Endothelial cell of umbilical vein (primary cell): ENCODE measurements at regions of chr20 and their contacts with region 1.

Region 1: DNA sequence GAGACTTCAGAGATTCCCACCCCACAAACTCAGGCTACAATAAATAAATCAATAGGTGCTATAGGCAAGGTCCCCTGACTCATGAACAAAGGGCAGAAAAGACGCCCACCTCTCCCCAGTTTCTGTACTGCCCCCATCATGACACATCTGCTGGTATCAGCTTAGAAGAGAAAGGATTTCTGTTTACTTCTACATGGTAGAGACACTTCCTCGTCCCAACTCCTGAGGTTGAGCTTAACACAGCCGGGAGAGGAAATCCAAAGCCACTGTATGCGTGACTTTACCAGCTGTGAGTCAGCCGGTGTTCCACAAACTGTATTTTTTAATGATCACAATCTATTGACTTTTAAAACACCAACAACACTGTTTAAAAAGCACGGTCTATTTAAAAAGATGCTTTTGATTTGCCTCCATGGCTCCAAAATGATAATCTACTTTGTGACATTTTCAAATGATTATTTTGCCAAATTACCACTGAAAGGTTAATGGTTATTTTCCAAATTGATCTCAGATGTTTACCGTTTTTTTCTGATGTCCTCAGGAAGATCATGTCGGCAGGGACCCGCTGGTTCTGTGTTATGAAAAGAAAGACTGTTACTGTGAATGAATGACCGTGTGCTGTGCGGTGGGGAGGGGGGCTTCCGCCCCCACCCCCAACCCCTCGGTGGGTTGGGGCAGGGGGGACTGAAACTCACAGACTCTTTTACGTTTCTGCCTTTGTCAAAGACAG is 72.5 kb downstream of the ATP9A start:
- DNase-seq: peak; percentile 96
- H3K4me3 ChIP-seq: peak overlapping the region in 1 of 3 experiments; percentile 8
- H3K27ac ChIP-seq: peak overlapping the region; percentile 98
- H3K4me1 ChIP-seq: peaks cover 31% of the 10 kb centered on the region
- H3K27me3 ChIP-seq: no peaks in the 10 kb centered on the region
- CTCF ChIP-seq: no peak
- POLR2A ChIP-seq: no peak

Region 2: DNA sequence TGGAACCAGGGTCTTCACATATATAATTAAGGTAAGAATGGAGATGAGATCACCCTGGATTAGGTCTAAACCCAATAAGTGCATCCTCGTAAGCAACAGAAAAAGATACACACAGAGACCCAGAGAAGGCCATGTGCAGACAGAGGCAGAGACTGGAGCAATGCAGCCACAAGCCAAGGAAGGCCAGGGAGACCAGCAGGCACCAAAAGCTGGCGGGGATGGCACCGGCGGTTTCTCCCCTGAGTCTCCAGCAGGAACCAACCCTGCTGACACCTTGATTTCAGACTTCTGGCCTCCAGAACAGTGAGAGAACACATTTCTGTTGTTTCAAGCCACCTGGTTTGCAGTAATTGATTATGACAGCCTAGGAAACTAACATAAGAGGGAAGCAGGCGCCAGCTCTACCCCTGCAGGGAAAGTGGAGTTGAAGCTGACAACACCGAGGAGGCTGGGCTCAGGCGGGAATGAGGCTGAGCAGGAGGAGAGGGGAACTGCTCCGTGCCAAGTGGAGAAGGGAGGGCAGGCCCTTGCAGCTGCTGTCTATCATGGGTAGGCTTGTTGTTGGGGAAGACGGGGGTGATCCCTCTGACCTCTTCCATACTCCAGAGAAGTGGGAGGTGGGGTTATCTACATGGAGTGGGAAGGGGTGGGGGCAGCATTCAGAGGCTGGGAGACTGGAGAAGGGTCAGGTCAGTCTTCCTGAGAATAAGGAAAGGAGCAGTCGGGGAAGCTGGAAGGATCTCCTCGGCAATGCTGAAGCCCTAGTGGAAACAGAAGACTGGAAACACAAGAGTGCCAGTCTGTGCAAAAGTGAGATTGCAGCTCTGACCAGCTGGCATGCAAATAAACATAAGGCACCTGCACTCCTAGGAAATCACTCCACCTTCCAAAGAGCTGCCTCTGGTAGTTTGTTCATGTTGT is 225.9 kb before region 1 on chr20:
- CTCF ChIA-PET with region 1: no interaction called
- POLR2A ChIA-PET with region 1: no interaction called
- dilution Hi-C with region 1: no loop called
- intact Hi-C with region 1: no loop called
- DNase-seq: peak; percentile 80
- H3K4me3 ChIP-seq: no peak overlapping the region
- H3K27ac ChIP-seq: no peak overlapping the region
- H3K4me1 ChIP-seq: peaks cover 2% of the 10 kb centered on the region
- H3K27me3 ChIP-seq: no peaks in the 10 kb centered on the region
- CTCF ChIP-seq: no peak
- POLR2A ChIP-seq: no peak

Region 3: GRCh38 chr20:51480507-51481270 is 215.1 kb before region 1 on chr20:
- CTCF ChIA-PET with region 1: no interaction called
- POLR2A ChIA-PET with region 1: no interaction called
- dilution Hi-C with region 1: no loop called
- intact Hi-C with region 1: no loop called
- DNase-seq: no peak
- H3K4me3 ChIP-seq: no peak overlapping the region
- H3K27ac ChIP-seq: no peak overlapping the region
- H3K4me1 ChIP-seq: no peaks in the 10 kb centered on the region
- H3K27me3 ChIP-seq: no peaks in the 10 kb centered on the region
- CTCF ChIP-seq: no peak
- POLR2A ChIP-seq: no peak

Region 4: GRCh38 chr20:51639206-51639832 is 56.4 kb before region 1 on chr20:
- CTCF ChIA-PET with region 1: interaction called, 49 read pairs
- POLR2A ChIA-PET with region 1: no interaction called
- dilution Hi-C with region 1: no loop called
- intact Hi-C with region 1: loop called (anchors 1 kb)
- DNase-seq: peak; percentile 84
- H3K4me3 ChIP-seq: no peak overlapping the region
- H3K27ac ChIP-seq: no peak overlapping the region
- H3K4me1 ChIP-seq: peaks cover 3% of the 10 kb centered on the region
- H3K27me3 ChIP-seq: no peaks in the 10 kb centered on the region
- CTCF ChIP-seq: peak; percentile 83 to 88
- POLR2A ChIP-seq: no peak

Region 5: GRCh38 chr20:51712501-51713197 is 16.9 kb after region 1 on chr20:
- CTCF ChIA-PET with region 1: interaction called, 11 read pairs
- POLR2A ChIA-PET with region 1: no interaction called
- dilution Hi-C with region 1: no loop called
- intact Hi-C with region 1: no loop called
- DNase-seq: peak; percentile 23
- H3K4me3 ChIP-seq: no peak overlapping the region
- H3K27ac ChIP-seq: no peak overlapping the region
- H3K4me1 ChIP-seq: no peaks in the 10 kb centered on the region
- H3K27me3 ChIP-seq: no peaks in the 10 kb centered on the region
- CTCF ChIP-seq: peak; percentile 37 to 43
- POLR2A ChIP-seq: no peak

Region 6: GRCh38 chr20:51767010-51767558 is 71.3 kb after region 1 on chr20:
- CTCF ChIA-PET with region 1: interaction called, 4 read pairs
- POLR2A ChIA-PET with region 1: no interaction called
- dilution Hi-C with region 1: no loop called
- intact Hi-C with region 1: loop called (anchors 5 kb)
- DNase-seq: peak; percentile 40
- H3K4me3 ChIP-seq: peak overlapping the region; percentile 51 to 88 (median 86)
- H3K27ac ChIP-seq: no peak overlapping the region
- H3K4me1 ChIP-seq: no peaks in the 10 kb centered on the region
- H3K27me3 ChIP-seq: no peaks in the 10 kb centered on the region
- CTCF ChIP-seq: no peak
- POLR2A ChIP-seq: no peak

Region 7: DNA sequence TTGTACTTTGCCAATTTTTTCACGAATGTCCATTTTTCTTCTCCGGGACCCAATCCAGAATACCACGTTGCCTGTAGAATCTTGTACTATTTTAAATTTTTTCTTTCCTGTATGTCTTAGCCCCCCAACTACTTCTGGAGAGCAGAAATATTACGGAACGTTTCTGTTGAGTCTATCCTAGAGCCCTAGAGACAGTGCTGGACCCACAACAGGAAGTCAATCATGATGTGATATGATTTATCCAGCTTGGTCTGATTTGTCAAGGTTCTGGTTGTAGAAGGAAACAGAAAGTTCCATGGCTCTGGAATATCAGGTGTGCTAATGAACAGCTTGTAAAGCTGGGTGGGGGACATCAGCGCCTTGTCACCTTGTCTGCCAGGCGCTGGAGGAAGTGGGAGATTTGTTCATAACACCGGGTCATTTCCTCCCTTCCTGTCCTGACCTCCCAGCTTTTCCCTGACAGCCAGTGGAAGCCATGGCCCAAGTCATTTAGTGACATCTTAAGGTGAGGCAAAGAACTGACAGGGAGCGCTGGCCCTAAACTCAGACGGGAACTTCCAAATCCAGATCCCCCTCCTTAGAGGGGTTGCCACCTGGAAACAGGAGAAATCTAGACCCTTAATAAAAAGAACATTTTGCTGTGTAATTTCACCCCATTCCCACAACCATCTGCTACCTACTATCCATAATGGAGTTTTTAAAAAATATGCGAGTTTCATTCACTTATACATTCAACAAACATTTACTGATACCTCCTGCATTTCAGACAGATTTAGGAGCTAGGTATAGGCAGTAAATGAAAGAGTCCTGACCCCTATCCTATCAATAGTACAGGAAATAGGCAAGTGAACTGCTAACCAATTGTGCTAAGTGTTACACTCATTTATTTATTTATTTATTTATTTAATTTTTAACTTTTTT is 365.3 kb after region 1 on chr20:
- CTCF ChIA-PET with region 1: interaction called, 26 read pairs
- POLR2A ChIA-PET with region 1: no interaction called
- dilution Hi-C with region 1: no loop called
- intact Hi-C with region 1: loop called (anchors 1 kb)
- DNase-seq: peak; percentile 82
- H3K4me3 ChIP-seq: no peak overlapping the region
- H3K27ac ChIP-seq: peak overlapping the region; percentile 62
- H3K4me1 ChIP-seq: peaks cover 9% of the 10 kb centered on the region
- H3K27me3 ChIP-seq: no peaks in the 10 kb centered on the region
- CTCF ChIP-seq: peak; percentile 50 to 55
- POLR2A ChIP-seq: no peak